Mucosa of descending colon (tissue), 3 donors: ENCODE measurements at regions of chr12 and their contacts with region 1.

Region 1: DNA sequence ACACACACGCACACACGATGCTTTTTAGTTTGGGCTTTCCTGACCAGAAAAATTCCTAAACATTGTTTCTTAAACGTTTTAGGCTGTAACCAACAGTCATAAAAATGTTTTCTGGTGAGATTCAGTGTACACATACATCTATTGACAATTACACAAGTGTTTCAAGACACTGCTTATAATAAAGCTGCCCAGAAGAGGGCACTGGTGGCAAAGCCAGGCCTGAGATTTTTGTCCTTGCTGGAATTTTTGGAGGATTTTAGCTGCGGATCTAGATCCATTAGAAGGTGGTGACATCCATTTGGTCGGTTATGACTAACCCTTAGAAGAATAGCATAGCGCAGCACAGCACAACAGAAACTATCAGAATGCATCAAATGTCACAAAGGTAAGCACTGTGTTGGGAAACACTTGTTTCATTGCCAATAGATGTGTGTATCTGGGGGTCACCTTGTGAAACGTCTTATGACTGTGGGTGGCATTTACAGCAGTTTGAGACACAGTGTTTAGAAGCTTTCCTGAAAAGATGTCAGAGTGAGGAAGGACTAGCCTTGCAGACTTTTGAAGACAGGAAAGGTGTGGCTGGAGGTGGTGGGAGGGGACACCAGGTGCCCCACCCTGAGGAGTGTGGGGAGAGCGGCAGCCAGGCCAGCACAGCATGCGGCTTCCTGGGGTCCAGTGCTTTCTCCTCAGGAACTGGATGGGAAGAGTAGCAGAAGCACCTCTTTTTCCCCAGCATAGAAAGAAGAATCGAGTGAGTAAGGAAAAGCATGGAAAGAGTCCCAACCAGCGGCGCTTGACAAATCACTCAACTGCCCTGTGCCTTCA is 54.7 kb upstream of the FKBP4 start:
- DNase-seq: peak in 1 of 3 donors; percentile 74
- ATAC-seq: peak; percentile 53
- H3K4me3 ChIP-seq: no peak overlapping the region
- H3K4me1 ChIP-seq: no peaks in the 10 kb centered on the region
- CTCF ChIP-seq: no peak

Region 2: DNA sequence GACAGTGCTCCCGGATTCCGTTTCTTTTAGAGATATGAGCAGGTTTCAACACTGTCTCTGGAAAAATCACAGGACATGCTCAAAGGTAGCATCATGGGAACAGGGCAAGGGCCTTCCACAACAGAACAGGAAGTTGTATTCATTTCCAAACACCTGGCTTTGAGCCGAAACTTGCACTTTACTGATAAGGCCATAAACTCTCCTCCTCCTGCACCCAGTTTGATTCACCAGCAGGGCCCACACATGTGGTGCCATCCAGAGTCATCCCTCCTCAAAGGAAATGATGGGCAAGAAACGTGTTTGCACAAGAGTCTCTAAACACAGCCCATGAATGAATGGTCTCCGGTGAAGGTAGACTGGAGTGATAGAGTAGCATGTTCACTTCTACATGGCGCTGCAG is 213.7 kb before region 1 on chr12:
- intact Hi-C with region 1: no loop called
- DNase-seq: peak in 1 of 3 donors; percentile 56
- ATAC-seq: peak; percentile 73
- H3K4me3 ChIP-seq: no peak overlapping the region
- H3K4me1 ChIP-seq: no peaks in the 10 kb centered on the region
- CTCF ChIP-seq: no peak

Region 3: DNA sequence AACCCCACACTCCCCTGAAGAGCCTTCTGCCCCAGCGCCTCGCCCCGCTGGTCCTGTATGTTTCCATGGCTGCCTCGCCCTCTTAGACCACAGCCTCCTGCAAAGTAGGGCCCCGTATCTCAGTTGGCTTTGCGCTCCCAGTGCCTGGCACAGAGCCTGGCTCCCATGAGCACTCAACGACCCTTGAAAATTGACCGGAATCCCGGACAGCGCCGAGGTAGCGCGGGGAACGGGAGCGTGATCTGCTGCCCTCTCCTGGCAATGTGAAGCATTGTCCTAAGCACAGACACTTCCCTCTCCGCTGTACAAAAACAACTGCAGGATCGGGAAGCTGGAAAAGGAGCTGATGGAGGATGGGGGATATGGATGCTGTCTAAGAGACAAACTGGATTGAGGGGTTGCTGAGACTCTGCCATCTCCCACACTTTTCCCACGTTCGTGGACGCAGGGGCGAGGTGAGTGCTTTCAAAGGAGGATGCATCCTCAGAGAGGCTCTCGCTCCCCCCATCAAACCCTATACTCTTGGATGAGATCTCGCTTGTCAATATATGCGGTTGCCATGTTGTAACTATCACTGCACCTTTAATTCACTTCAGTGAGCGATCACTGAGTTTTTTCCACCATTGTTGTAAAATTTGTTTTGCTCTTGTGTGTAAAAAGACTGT is 44.0 kb after region 1 on chr12:
- intact Hi-C with region 1: loop called in 1 of 2 experiments (anchors 2 kb)
- DNase-seq: peak in 2 of 3 donors; percentile 66 to 70
- ATAC-seq: peak; percentile 93
- H3K4me3 ChIP-seq: no peak overlapping the region
- H3K4me1 ChIP-seq: peaks cover 13% of the 10 kb centered on the region
- CTCF ChIP-seq: peak; percentile 72